SK-N-SH (cell line): ENCODE measurements at regions of chr17 and their contacts with region 1.

Region 1: DNA sequence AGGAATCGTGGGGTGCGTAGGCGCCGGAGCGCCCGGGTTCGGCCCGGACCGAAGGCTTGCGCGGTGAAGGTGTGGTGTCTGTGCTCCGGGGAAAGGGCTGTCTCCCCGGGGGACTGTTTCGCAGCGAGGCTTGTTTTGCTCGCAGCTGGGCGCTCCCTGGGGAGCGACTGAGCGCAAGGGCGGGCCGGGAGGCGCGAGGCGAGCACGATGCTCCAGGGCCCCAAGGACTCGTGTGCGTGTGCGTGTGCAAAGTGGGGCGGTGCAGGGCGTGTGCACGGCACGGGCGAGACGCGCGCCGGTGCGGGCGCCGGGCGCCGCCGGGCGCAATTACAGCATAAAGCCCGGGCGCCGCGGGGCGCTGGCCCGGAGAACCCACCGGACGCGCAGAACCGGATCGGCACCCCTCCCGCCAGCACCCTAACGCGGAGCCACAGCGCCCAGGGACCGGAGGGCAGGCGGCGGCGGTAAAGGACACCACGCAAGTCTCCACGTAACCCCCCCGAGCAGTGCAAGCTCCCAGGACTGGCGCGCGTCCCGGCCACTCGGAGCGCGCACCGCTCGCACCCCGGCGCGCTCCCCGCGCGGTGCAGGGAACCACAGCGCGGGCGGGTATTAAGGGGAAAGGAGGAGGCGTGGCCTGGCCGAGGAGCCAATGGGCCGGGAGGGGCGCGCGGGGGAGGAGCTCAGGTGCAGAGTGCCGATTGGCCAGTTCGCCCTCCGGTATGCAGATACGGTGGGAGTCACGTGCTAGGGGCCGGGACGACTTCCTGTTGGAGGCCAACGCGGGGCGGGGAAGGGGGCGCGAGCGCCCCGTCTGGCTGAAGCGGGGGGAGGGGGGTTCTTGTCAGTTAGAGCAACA is at the start of gene TNRC6C:
- DNase-seq: peak; percentile 100
- H3K4me3 ChIP-seq: peak within 1 kb of the TSS; percentile 80 to 86
- H3K27ac ChIP-seq: peak within 1 kb of the TSS in 1 of 2 experiments; percentile 92; a peak in 2 of 4 replicates
- H3K4me1 ChIP-seq: peaks cover 0 to 35% of the 10 kb centered on the region in 2 experiments; a peak in 3 of 4 replicates
- H3K27me3 ChIP-seq: peaks cover 42% of the 10 kb centered on the region; the same call in 1 of the 2 replicates
- CTCF ChIP-seq: no peak
- EP300 ChIP-seq: no peak; a peak in 1 of 4 replicates
- RAD21 ChIP-seq: peak; percentile 22; the same call in 1 of the 2 replicates
- polyA plus RNA-seq, gene TNRC6C: 1.6 and 2.2 TPM in 2 replicates

Region 2: GRCh38 chr17:77734341-77735080 is 223.6 kb before region 1 on chr17:
- CTCF ChIA-PET with region 1: interaction called, 6 read pairs
- POLR2A ChIA-PET with region 1: interaction called, 25 read pairs
- DNase-seq: peak; percentile 99
- H3K4me3 ChIP-seq: peak overlapping the region in 1 of 2 experiments; percentile 15; a peak in 2 of 4 replicates
- H3K27ac ChIP-seq: peak overlapping the region in 1 of 2 experiments; percentile 93; a peak in 2 of 4 replicates
- H3K4me1 ChIP-seq: peaks cover 12 to 35% of the 10 kb centered on the region in 2 experiments; a peak in 3 of 4 replicates
- H3K27me3 ChIP-seq: no peaks in the 10 kb centered on the region
- CTCF ChIP-seq: no peak
- EP300 ChIP-seq: peak in 1 of 2 experiments; percentile 76; a peak in 2 of 4 replicates
- RAD21 ChIP-seq: peak; percentile 59

Region 3: DNA sequence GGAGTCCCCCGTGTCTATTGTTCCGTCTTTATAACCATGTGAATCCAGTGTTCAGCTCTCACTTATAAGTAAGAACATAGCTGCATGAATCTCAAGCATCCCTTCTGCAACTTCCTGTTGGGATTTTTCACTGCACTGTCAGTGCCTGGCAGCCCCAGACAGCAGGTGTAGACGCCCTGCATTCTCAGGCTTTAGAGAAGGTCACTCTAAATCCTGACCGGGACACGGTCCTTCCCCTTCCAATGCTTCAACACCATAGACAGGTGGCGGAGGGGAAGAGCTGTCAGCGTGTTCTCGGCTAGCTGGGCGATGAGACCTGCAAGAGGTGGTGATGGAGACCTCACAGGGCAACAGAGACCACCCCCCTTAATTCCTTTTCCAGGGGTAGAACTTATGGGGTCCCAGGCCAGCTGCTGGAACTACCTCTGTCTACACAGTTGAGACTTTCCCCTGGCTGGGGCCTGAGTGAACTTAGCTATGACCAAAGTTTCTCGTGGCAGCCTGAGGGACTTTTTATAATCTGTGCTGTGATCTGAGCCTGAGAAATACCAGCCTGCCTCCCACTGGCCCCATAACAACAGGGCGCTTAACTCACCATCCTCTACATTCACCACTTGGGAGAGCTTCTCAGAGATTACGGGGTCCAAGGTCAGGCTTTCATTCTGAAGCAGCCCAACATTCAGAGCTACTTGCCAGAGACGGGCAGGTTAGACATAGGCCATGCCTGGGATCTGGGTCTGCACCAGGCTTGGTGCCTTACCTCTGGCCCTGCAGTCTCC is 142.8 kb before region 1 on chr17:
- CTCF ChIA-PET with region 1: no interaction called
- POLR2A ChIA-PET with region 1: interaction called, 17 read pairs
- DNase-seq: peak; percentile 63
- H3K4me3 ChIP-seq: no peak overlapping the region
- H3K27ac ChIP-seq: no peak overlapping the region
- H3K4me1 ChIP-seq: peaks cover 5 to 14% of the 10 kb centered on the region in 2 experiments; a peak in 2 of 4 replicates
- H3K27me3 ChIP-seq: no peaks in the 10 kb centered on the region
- CTCF ChIP-seq: no peak
- EP300 ChIP-seq: no peak
- RAD21 ChIP-seq: peak; percentile 76

Region 4: DNA sequence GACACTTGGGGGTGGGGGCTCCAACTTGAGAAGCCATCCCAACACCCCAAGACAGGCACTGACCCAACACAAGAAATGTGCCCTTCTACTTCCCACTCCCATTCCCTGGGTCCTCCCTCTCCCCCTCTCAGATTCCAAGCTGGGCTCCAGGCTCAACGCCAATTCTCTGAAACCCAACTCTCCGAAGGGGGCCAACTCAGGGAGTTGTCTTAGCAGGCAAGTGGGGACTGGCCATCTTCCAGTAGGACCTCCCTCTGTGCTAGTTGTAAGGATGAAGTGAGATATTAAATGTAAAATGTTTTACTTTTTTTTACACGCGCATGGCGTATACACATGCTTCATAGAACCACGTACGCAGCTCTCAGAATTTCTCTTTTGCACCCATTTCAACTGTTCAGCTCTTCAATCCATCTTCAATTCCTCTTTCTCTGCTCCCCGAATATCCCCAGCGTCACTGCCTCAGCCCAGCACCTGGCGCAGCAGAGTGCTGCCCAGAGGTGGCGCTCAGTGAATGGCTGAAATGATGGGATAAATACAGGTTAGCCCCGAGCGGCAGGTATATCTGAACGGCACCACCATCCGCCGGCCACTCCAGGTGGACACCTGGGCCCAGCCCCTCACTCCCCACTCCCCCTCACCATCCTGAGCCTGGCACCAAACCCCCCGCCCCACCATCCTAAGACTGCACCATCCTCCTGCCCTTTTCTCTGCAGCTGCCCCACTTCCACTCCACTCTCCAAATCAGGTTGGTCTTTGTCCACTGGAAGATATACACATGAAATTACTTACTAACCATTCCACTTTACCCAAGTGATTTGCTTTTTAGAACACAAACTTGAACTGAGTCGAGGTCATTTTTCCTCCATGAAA is 43.5 kb before region 1 on chr17:
- CTCF ChIA-PET with region 1: interaction called, 5 read pairs
- POLR2A ChIA-PET with region 1: interaction called, 30 read pairs
- DNase-seq: no peak
- H3K4me3 ChIP-seq: no peak overlapping the region
- H3K27ac ChIP-seq: no peak overlapping the region
- H3K4me1 ChIP-seq: peaks cover 0 to 21% of the 10 kb centered on the region in 2 experiments; a peak in 2 of 4 replicates
- H3K27me3 ChIP-seq: peaks cover 41% of the 10 kb centered on the region
- CTCF ChIP-seq: no peak
- EP300 ChIP-seq: no peak
- RAD21 ChIP-seq: peak; percentile 35

Region 5: GRCh38 chr17:77968788-77969187 is 10.7 kb after region 1 on chr17:
- CTCF ChIA-PET with region 1: interaction called, 3 read pairs
- POLR2A ChIA-PET with region 1: interaction called, 11 read pairs
- DNase-seq: no peak
- H3K4me3 ChIP-seq: no peak overlapping the region
- H3K27ac ChIP-seq: no peak overlapping the region
- H3K4me1 ChIP-seq: peaks cover 0 to 23% of the 10 kb centered on the region in 2 experiments; a peak in 3 of 4 replicates
- H3K27me3 ChIP-seq: no peaks in the 10 kb centered on the region
- CTCF ChIP-seq: no peak
- EP300 ChIP-seq: no peak
- RAD21 ChIP-seq: no peak

Region 6: DNA sequence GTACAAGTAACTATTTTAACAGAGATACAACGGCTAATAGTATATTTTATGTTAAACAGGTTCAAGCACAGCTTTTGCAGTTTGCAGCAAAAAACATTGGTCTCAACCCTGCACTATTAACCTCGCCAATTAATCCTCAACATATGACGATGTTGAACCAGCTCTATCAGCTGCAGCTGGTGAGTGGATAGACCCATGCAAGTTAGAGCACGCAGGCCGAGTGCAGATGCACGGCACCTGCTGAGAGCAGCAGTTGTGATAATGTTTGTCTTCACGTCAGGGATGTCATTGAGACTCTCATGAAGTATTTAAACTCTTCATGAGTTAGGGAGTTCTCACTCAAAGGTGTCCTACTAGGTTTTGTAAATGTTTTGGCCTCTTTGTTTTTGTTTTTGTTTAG is 124.9 kb after region 1 on chr17:
- CTCF ChIA-PET with region 1: no interaction called
- POLR2A ChIA-PET with region 1: no interaction called
- DNase-seq: no peak
- H3K4me3 ChIP-seq: no peak overlapping the region
- H3K27ac ChIP-seq: no peak overlapping the region
- H3K4me1 ChIP-seq: no peaks in the 10 kb centered on the region
- H3K27me3 ChIP-seq: no peaks in the 10 kb centered on the region
- CTCF ChIP-seq: no peak
- EP300 ChIP-seq: no peak
- RAD21 ChIP-seq: no peak